ENCODE measurements at regions of chr7 and their contacts with region 1.

Region 1: GRCh38 chr7:33185786-33186185 is 56.4 kb downstream of the BBS9 start:
- DNase-seq: peak; percentile 63
- H3K4me3 ChIP-seq: no peak overlapping the region
- H3K27ac ChIP-seq: no peak overlapping the region
- H3K4me1 ChIP-seq: no peaks in the 10 kb centered on the region
- H3K27me3 ChIP-seq: no peaks in the 10 kb centered on the region
- CTCF ChIP-seq: peak; percentile 34 to 52
- POLR2A ChIP-seq: no peak

Region 2: GRCh38 chr7:33423646-33424020 is 237.8 kb after region 1 on chr7:
- CTCF ChIA-PET with region 1: no interaction called
- POLR2A ChIA-PET with region 1: no interaction called
- dilution Hi-C with region 1: no loop called
- intact Hi-C with region 1: loop called (anchors 5 kb)
- DNase-seq: peak; percentile 15
- H3K4me3 ChIP-seq: no peak overlapping the region
- H3K27ac ChIP-seq: no peak overlapping the region
- H3K4me1 ChIP-seq: no peaks in the 10 kb centered on the region
- H3K27me3 ChIP-seq: no peaks in the 10 kb centered on the region
- CTCF ChIP-seq: peak; percentile 16 to 27
- POLR2A ChIP-seq: no peak

Region 3: GRCh38 chr7:33459340-33459751 is 273.6 kb after region 1 on chr7:
- CTCF ChIA-PET with region 1: interaction called, 5 read pairs
- POLR2A ChIA-PET with region 1: no interaction called
- dilution Hi-C with region 1: no loop called
- intact Hi-C with region 1: loop called (anchors 2 kb)
- DNase-seq: peak; percentile 74
- H3K4me3 ChIP-seq: no peak overlapping the region
- H3K27ac ChIP-seq: no peak overlapping the region
- H3K4me1 ChIP-seq: no peaks in the 10 kb centered on the region
- H3K27me3 ChIP-seq: no peaks in the 10 kb centered on the region
- CTCF ChIP-seq: peak; percentile 38 to 59
- POLR2A ChIP-seq: no peak

Region 4: DNA sequence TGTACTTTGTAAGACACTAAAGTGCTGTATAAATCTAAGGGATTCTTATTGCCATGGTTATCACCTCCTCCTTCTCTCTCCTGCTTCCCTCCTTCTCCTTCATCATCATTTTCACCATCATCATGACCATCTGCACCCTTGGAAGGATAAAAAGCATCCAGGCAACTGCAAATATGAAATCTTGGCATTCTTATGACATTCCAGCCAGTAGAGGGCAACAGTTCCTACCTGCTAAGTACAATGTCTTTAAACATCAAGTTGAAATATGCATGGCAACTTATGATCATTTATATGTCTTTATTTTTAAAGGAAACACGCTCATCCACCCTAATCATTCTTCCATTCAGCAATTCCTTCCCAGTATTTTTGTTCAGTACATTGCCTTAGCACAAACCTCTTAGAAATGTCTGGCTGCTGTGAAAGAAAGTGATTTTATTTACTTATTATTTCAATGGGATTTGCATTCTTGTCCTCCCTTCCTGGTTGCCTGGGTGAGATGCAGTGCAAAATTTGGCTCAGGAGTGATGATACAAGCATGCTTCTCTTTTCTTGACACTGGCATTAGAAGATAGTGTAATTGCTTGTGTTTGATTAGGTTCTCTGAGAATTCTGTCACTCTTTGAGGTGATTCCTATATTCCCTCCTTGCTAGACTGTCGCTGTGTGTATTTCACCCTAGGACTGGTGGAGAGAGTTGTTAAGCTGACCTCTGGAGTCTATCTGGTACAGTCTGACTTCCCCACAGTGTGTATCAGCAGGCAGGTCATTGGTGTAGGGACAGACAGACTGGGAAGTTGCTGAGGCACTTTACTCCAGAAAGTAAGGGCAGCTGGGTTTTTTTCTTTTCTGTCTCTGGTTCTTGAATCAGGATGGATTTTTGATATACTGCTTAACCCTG is 531.0 kb after region 1 on chr7:
- CTCF ChIA-PET with region 1: no interaction called
- POLR2A ChIA-PET with region 1: no interaction called
- dilution Hi-C with region 1: no loop called
- intact Hi-C with region 1: loop called (anchors 10 kb)
- DNase-seq: peak; percentile 84
- H3K4me3 ChIP-seq: no peak overlapping the region
- H3K27ac ChIP-seq: no peak overlapping the region
- H3K4me1 ChIP-seq: peaks cover 9% of the 10 kb centered on the region
- H3K27me3 ChIP-seq: no peaks in the 10 kb centered on the region
- CTCF ChIP-seq: peak; percentile 61 to 68
- POLR2A ChIP-seq: no peak

Region 5: GRCh38 chr7:33757562-33758165 is 571.9 kb after region 1 on chr7:
- CTCF ChIA-PET with region 1: interaction called, 5 read pairs
- POLR2A ChIA-PET with region 1: no interaction called
- dilution Hi-C with region 1: no loop called
- intact Hi-C with region 1: loop called (anchors 5 kb)
- DNase-seq: peak; percentile 58
- H3K4me3 ChIP-seq: no peak overlapping the region
- H3K27ac ChIP-seq: no peak overlapping the region
- H3K4me1 ChIP-seq: peaks cover 8% of the 10 kb centered on the region
- H3K27me3 ChIP-seq: no peaks in the 10 kb centered on the region
- CTCF ChIP-seq: peak; percentile 31 to 35
- POLR2A ChIP-seq: no peak

Measured in endothelial cell of umbilical vein (primary cell).